ENCODE measurements at regions of chr18 and their contacts with region 1.

Region 1: GRCh38 chr18:63016270-63016669 is 300.9 kb downstream of the PHLPP1 start:
- DNase-seq: peak; percentile 11 to 79 (median 51)
- ATAC-seq: peak; percentile 77
- H3K4me3 ChIP-seq: no peak overlapping the region
- H3K4me3 Mint-ChIP-seq: no peak overlapping the region
- H3K27ac ChIP-seq: no peak overlapping the region
- H3K27ac Mint-ChIP-seq: no peak overlapping the region
- H3K4me1 ChIP-seq: no peaks in the 10 kb centered on the region
- H3K4me1 Mint-ChIP-seq: no peaks in the 10 kb centered on the region
- H3K27me3 ChIP-seq: no peaks in the 10 kb centered on the region
- H3K27me3 Mint-ChIP-seq: peaks cover 16% of the 10 kb centered on the region
- CTCF ChIP-seq: peak; percentile 90

Region 2: GRCh38 chr18:63074981-63075404 is 58.7 kb after region 1 on chr18:
- CTCF ChIA-PET with region 1: interaction called, 9 read pairs
- POLR2A ChIA-PET with region 1: no interaction called
- intact Hi-C with region 1: loop called (anchors 1 kb)
- DNase-seq: peak; percentile 34 to 76 (median 54)
- ATAC-seq: peak; percentile 85
- H3K4me3 ChIP-seq: peak overlapping the region; percentile 46 to 74
- H3K4me3 Mint-ChIP-seq: peak overlapping the region; percentile 84
- H3K27ac ChIP-seq: peak overlapping the region in 1 of 2 experiments; percentile 10
- H3K27ac Mint-ChIP-seq: peak overlapping the region; percentile 28
- H3K4me1 ChIP-seq: no peaks in the 10 kb centered on the region
- H3K4me1 Mint-ChIP-seq: peaks cover 11% of the 10 kb centered on the region
- H3K27me3 ChIP-seq: peaks cover 0 to 2% of the 10 kb centered on the region in 2 experiments
- H3K27me3 Mint-ChIP-seq: peaks cover 6% of the 10 kb centered on the region
- CTCF ChIP-seq: no peak

Region 3: GRCh38 chr18:63339920-63340484 is 323.7 kb after region 1 on chr18:
- CTCF ChIA-PET with region 1: interaction called, 40 read pairs
- POLR2A ChIA-PET with region 1: no interaction called
- intact Hi-C with region 1: loop called (anchors 1 to 5 kb)
- DNase-seq: peak in 8 of 9 experiments; percentile 10 to 75 (median 45)
- ATAC-seq: peak; percentile 67
- H3K4me3 ChIP-seq: no peak overlapping the region
- H3K4me3 Mint-ChIP-seq: no peak overlapping the region
- H3K27ac ChIP-seq: no peak overlapping the region
- H3K27ac Mint-ChIP-seq: no peak overlapping the region
- H3K4me1 ChIP-seq: no peaks in the 10 kb centered on the region
- H3K4me1 Mint-ChIP-seq: peaks cover 4% of the 10 kb centered on the region
- H3K27me3 ChIP-seq: no peaks in the 10 kb centered on the region
- H3K27me3 Mint-ChIP-seq: no peaks in the 10 kb centered on the region
- CTCF ChIP-seq: peak; percentile 75

Region 4: GRCh38 chr18:63346031-63346430 is 329.8 kb after region 1 on chr18:
- CTCF ChIA-PET with region 1: interaction called, 40 read pairs
- POLR2A ChIA-PET with region 1: no interaction called
- intact Hi-C with region 1: loop called in 1 of 2 experiments (anchors 5 kb)
- DNase-seq: no peak
- ATAC-seq: no peak
- H3K4me3 ChIP-seq: no peak overlapping the region
- H3K4me3 Mint-ChIP-seq: no peak overlapping the region
- H3K27ac ChIP-seq: no peak overlapping the region
- H3K27ac Mint-ChIP-seq: no peak overlapping the region
- H3K4me1 ChIP-seq: no peaks in the 10 kb centered on the region
- H3K4me1 Mint-ChIP-seq: no peaks in the 10 kb centered on the region
- H3K27me3 ChIP-seq: no peaks in the 10 kb centered on the region
- H3K27me3 Mint-ChIP-seq: no peaks in the 10 kb centered on the region
- CTCF ChIP-seq: no peak

Measured in CD8-positive, alpha-beta T cell (primary cell).